HEK293T (cell line): ENCODE measurements at regions of chr17 and their contacts with region 1.

Region 1: GRCh38 chr17:76737082-76737675 is at the start of gene SRSF2:
- DNase-seq: peak; percentile 96

Region 2: DNA sequence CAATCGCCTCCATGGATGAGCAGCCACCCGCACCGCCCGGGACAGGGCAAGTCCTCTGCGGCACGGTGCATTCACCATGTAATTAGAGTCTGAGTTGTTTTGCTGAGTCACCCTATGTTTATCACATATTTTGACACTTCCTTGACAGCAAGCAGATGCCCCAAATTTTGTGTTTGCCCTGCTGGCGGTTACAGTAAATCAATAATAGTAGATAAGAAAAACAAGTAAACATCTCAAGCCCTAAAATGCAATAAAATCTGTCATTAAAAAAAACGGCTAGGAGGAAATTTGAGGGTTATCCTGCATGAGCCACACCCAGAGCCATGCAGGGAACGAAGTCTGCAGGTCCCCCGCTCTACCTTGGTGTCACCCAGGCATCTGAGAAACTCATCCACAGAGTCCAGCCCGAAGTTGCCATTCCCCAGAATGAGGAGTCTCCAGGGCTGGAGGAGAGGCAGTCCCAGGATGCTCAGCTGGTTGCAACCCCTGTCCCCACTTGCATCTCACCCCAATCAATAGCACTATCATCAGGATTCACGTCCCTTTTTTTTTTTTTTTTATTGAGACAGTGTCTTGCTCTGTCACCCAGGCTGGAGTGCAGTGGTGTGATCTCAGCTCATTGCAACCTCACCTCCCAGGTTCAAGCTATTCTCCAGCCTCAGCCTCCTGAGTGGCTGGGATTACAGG is 77.1 kb before region 1 on chr17:
- CTCF ChIA-PET with region 1: no interaction called
- POLR2A ChIA-PET with region 1: no interaction called
- DNase-seq: no peak

Region 3: GRCh38 chr17:76726231-76726775 is 10.9 kb before region 1 on chr17 and contains the start of gene JMJD6:
- CTCF ChIA-PET with region 1: interaction called, 3 read pairs
- POLR2A ChIA-PET with region 1: interaction called, 58 read pairs
- DNase-seq: peak; percentile 89

Region 4: GRCh38 chr17:76909971-76910760 is 173.0 kb after region 1 on chr17:
- CTCF ChIA-PET with region 1: no interaction called
- POLR2A ChIA-PET with region 1: no interaction called
- DNase-seq: peak; percentile 55